Calu3 (cell line): ENCODE measurements at regions of chr11 and their contacts with region 1.

Region 1: DNA sequence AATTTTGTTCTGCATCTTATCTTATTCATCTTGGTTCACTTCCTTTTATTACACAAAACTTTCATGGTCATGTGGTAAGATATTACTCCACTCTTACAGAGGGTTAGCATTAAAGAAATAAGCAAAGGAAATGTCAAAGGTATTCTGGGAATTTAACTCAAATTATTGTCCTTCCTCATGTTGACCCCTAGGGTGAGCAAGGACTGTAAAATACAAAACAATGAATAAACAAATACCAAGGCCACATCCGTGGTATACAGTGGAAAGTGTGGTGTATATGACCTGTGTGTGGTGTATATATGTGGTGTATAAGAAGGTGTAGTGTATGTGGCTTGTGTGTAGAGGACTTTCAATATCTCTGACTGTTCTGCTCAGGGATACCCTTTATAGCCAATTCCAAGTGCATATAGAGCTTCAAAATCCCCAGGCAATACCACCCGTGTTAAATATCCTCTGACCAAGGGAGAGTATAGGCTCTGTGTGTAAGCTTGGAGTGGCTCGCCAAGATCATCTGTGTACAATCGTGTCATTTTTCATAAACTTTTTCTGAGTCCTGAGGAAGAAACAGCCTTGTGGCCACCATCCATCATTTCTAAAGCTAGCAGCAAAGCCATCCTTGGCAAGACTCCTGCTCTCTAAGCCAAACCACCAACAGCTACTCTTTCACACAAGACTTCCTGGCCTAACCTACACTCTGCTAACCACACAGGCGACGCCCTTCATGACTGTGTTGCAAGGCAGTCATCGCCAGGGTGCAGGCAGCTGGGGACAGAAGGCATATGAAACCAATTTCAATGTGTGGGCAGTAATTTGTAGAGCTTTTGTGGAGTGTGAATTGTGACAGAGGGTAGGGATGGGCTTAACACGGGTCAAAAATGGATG is 548.0 kb downstream of the ETS1 start:
- DNase-seq: peak; percentile 45
- H3K4me3 Mint-ChIP-seq: no peak overlapping the region
- H3K27ac Mint-ChIP-seq: no peak overlapping the region
- H3K4me1 Mint-ChIP-seq: peaks cover 23% of the 10 kb centered on the region
- H3K27me3 Mint-ChIP-seq: no peaks in the 10 kb centered on the region
- CTCF ChIP-seq: no peak

Region 2: DNA sequence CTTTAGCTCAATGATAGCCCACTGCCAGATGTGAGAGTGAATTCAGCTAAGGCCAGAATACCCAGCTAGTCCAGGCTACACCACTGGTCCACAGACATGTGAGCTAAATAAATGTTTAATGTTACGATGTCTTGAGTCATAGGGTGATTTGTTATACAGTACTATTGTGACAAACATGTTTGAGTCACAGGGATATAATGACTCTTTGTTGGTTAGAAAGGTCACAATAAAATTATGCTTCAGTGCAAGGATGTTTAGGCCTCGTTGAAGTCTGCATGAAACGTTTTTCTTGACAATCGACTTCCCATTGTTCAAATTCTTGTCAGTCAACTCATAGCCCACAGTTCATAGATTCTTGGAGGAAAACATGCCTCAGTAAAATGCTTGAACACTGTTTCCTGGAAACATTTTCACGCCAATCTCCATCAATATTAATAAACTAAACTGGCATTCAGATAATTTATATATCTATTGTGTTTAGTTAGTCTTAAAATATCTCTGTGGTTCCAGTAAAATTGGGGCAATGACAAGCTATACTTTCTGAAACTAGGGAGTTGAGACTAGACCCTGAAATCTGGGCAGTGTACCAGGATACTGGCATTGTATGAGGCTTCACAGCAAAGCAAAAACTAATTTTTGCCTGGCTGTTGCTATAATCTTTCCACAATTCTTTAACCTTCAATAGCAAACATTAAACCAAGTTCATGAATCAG is 388.1 kb before region 1 on chr11:
- CTCF ChIA-PET with region 1: no interaction called
- intact Hi-C with region 1: no loop called
- DNase-seq: no peak
- H3K4me3 Mint-ChIP-seq: no peak overlapping the region
- H3K27ac Mint-ChIP-seq: no peak overlapping the region
- H3K4me1 Mint-ChIP-seq: no peaks in the 10 kb centered on the region
- H3K27me3 Mint-ChIP-seq: no peaks in the 10 kb centered on the region
- CTCF ChIP-seq: no peak

Region 3: GRCh38 chr11:128086794-128087193 is 47.4 kb after region 1 on chr11:
- CTCF ChIA-PET with region 1: no interaction called
- intact Hi-C with region 1: no loop called
- DNase-seq: no peak
- H3K4me3 Mint-ChIP-seq: no peak overlapping the region
- H3K27ac Mint-ChIP-seq: no peak overlapping the region
- H3K4me1 Mint-ChIP-seq: no peaks in the 10 kb centered on the region
- H3K27me3 Mint-ChIP-seq: no peaks in the 10 kb centered on the region
- CTCF ChIP-seq: no peak

Region 4: GRCh38 chr11:128135451-128135850 is 96.1 kb after region 1 on chr11:
- CTCF ChIA-PET with region 1: no interaction called
- intact Hi-C with region 1: loop called (anchors 5 kb)
- DNase-seq: peak; percentile 33
- H3K4me3 Mint-ChIP-seq: no peak overlapping the region
- H3K27ac Mint-ChIP-seq: no peak overlapping the region
- H3K4me1 Mint-ChIP-seq: peaks cover 17% of the 10 kb centered on the region
- H3K27me3 Mint-ChIP-seq: no peaks in the 10 kb centered on the region
- CTCF ChIP-seq: no peak

Region 5: DNA sequence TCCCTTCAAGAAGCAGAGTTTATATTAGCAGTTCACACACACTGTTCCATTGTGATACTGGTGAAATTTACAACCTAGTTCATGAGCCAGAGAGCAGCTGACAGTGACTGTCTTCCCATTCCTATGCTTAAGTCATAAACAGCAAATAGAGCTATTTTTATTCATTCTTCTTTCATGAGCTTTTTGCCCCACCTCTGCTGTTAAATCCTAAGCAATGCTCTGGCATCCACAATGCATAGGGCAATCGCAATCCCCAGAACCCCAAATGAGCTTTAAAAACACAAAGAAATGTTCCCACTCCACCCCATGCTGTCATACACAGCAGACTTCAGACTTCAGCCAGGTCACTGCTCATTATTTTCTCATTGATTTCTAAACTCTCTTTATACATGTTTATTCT is 240.5 kb after region 1 on chr11:
- CTCF ChIA-PET with region 1: no interaction called
- intact Hi-C with region 1: loop called (anchors 10 kb)
- DNase-seq: no peak
- H3K4me3 Mint-ChIP-seq: no peak overlapping the region
- H3K27ac Mint-ChIP-seq: peak overlapping the region; percentile 27
- H3K4me1 Mint-ChIP-seq: no peaks in the 10 kb centered on the region
- H3K27me3 Mint-ChIP-seq: no peaks in the 10 kb centered on the region
- CTCF ChIP-seq: no peak